Thyroid gland (tissue), 4 donors: ENCODE measurements at regions of chr19 and their contacts with region 1.

Region 1: DNA sequence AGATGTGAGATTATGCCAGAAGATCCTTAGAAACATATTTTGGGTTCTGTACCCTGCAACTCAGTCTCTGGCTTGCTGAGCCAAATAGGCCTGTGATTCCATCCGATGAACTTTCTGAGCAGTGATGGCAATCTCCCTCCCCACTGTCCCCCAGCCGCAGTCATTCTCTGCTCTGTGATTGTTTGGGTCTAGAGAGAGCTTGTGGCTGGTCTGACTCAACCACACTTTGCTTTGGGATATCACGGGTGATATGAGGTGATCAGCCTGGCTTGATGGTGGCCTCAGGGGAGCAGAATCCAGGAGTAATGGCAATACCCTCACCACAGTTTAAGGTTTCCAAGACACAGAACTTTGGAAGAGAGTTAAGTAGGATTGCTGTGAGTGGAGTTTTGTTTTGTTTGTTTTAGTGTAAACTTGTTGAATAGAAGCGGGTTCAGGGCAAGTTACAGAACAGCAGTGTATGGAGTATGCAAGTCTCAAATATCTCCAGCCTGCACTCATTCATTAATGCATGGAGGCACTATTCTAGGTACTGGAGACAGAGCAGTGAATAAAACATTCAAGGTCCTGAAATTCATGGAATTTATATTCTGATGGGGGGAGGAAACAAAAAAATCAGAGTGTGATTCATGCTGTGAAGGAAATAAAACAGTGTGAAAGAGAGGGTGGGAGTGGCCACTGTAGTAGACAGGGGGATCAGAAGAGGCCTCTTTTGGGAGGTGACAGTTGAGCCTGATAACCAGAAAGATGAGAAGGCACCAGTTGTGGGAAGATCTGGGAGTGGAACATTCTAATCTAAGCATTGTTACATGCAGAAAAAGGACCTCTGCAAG is 5.3 kb downstream of the SAMD4B start:
- DNase-seq: no peak
- H3K4me3 ChIP-seq: no peak overlapping the region
- H3K27ac ChIP-seq: no peak overlapping the region
- H3K4me1 ChIP-seq: peaks cover 7 to 30% of the 10 kb centered on the region in 2 donors
- H3K27me3 ChIP-seq: no peaks in the 10 kb centered on the region
- CTCF ChIP-seq: no peak
- POLR2A ChIP-seq: no peak

Region 2: GRCh38 chr19:39384839-39385568 is 37.5 kb after region 1 on chr19:
- intact Hi-C with region 1: loop called (anchors 5 kb)
- DNase-seq: no peak
- H3K4me3 ChIP-seq: no peak overlapping the region
- H3K27ac ChIP-seq: no peak overlapping the region
- H3K4me1 ChIP-seq: peaks cover 3 to 5% of the 10 kb centered on the region in 2 donors
- H3K27me3 ChIP-seq: no peaks in the 10 kb centered on the region
- CTCF ChIP-seq: no peak
- POLR2A ChIP-seq: no peak

Region 3: DNA sequence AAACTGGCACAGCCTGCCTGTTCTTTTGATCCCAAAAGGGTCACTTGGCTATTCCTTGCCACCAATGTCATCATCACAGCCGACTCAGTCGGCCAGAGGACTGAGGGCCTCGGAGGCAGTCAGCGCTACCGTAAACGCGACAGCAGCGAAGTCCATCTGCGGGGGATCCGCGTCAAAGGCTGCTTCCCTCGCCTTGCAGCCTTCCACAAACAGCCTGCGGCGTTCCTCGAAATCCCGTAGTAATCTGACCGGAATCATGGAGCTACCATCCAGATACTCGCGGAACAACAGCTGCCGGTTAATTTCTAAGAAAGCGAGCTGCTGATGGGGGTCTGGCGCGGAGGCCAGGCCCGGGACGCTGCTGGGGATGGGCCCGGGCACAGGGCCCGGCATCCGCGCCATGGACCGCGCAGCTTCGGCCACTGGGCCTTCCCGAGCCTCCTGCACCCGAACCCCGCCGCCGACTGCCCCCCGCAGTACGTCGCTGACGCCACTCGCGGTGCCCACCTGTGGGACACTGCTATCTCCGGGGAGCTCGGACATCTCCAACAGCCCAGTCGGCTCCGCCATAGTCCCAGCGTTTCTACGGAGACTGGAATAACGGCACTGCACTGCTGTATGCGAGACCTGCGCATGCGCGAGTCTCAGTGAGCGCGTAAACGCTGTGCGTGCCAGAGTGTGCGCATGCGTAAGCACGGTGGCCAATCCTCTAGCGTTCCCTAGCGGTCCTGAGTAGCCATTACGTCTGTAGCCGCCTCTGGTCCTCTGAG is 184.9 kb after region 1 on chr19 and contains the start of gene EID2B:
- intact Hi-C with region 1: no loop called
- DNase-seq: peak; percentile 95 to 96
- H3K4me3 ChIP-seq: peak within 1 kb of the TSS; percentile 30 to 95 (median 60)
- H3K27ac ChIP-seq: peak within 1 kb of the TSS; percentile 54 to 74 (median 58)
- H3K4me1 ChIP-seq: peaks cover 0 to 5% of the 10 kb centered on the region in 2 donors
- H3K27me3 ChIP-seq: no peaks in the 10 kb centered on the region
- CTCF ChIP-seq: peak; percentile 98 to 100 (median 100)
- POLR2A ChIP-seq: peak; percentile 21 to 84
- total RNA-seq, gene EID2B: 2.4 to 7.1 (median 4.4) TPM